ENCODE measurements at regions of chr3 and their contacts with region 1.

Region 1: GRCh38 chr3:194306109-194306686 is 44.9 kb downstream of the CPN2 start:
- DNase-seq: peak; percentile 61
- ATAC-seq: peak; percentile 74
- H3K4me3 ChIP-seq: no peak overlapping the region; the same call in 1 of the 2 replicates
- H3K27ac ChIP-seq: peak overlapping the region; percentile 75
- H3K4me1 ChIP-seq: peaks cover 46% of the 10 kb centered on the region
- H3K27me3 ChIP-seq: no peaks in the 10 kb centered on the region
- CTCF ChIP-seq: no peak
- EP300 ChIP-seq: no peak
- POLR2A ChIP-seq: no peak
- RAD21 ChIP-seq: no peak

Region 2: GRCh38 chr3:193780810-193781472 is 525.3 kb before region 1 on chr3:
- CTCF ChIA-PET with region 1: interaction called, 14 read pairs
- POLR2A ChIA-PET with region 1: no interaction called
- RAD21 ChIA-PET with region 1: no interaction called
- SMC1A ChIA-PET with region 1: interaction called, 3 read pairs
- in situ Hi-C with region 1: no loop called
- intact Hi-C with region 1: no loop called
- DNase-seq: no peak
- ATAC-seq: peak; percentile 56
- H3K4me3 ChIP-seq: no peak overlapping the region
- H3K27ac ChIP-seq: no peak overlapping the region
- H3K4me1 ChIP-seq: no peaks in the 10 kb centered on the region
- H3K27me3 ChIP-seq: peaks cover 0 to 3% of the 10 kb centered on the region in 2 experiments; a peak in 2 of 4 replicates
- CTCF ChIP-seq: peak; percentile 47 to 62 (median 48); a peak in 5 of 6 replicates
- EP300 ChIP-seq: no peak
- POLR2A ChIP-seq: no peak
- RAD21 ChIP-seq: peak; percentile 85

Region 3: GRCh38 chr3:194184265-194184751 is 121.9 kb before region 1 on chr3:
- CTCF ChIA-PET with region 1: no interaction called
- POLR2A ChIA-PET with region 1: no interaction called
- RAD21 ChIA-PET with region 1: no interaction called
- SMC1A ChIA-PET with region 1: interaction called, 4 read pairs
- in situ Hi-C with region 1: no loop called
- intact Hi-C with region 1: loop called (anchors 5 kb)
- DNase-seq: no peak
- ATAC-seq: no peak
- H3K4me3 ChIP-seq: no peak overlapping the region
- H3K27ac ChIP-seq: no peak overlapping the region
- H3K4me1 ChIP-seq: no peaks in the 10 kb centered on the region
- H3K27me3 ChIP-seq: no peaks in the 10 kb centered on the region; a peak in 1 of 4 replicates
- CTCF ChIP-seq: no peak
- EP300 ChIP-seq: no peak
- POLR2A ChIP-seq: no peak
- RAD21 ChIP-seq: no peak